Naive thymus-derived CD4-positive, alpha-beta T cell (primary cell): ENCODE measurements at regions of chr9 and their contacts with region 1.

Region 1: GRCh38 chr9:112361601-112362000 is 18.3 kb upstream of the HSDL2 start:
- DNase-seq: peak in 7 of 9 donors; percentile 16 to 51 (median 40)
- ATAC-seq: peak; percentile 60
- H3K4me3 ChIP-seq: no peak overlapping the region
- H3K4me3 Mint-ChIP-seq: no peak overlapping the region
- H3K27ac ChIP-seq: no peak overlapping the region
- H3K27ac Mint-ChIP-seq: no peak overlapping the region
- H3K4me1 ChIP-seq: peaks cover 0 to 4% of the 10 kb centered on the region in 2 donors
- H3K4me1 Mint-ChIP-seq: peaks cover 0 to 4% (median 0%) of the 10 kb centered on the region in 7 donors
- H3K27me3 ChIP-seq: no peaks in the 10 kb centered on the region
- H3K27me3 Mint-ChIP-seq: peaks cover 0 to 22% (median 9%) of the 10 kb centered on the region in 5 donors

Region 2: GRCh38 chr9:112086627-112087026 is 275.0 kb before region 1 on chr9:
- CTCF ChIA-PET with region 1: interaction called, 11 read pairs
- POLR2A ChIA-PET with region 1: interaction called, 4 read pairs
- intact Hi-C with region 1: loop called (anchors 1 kb)
- DNase-seq: no peak
- ATAC-seq: no peak
- H3K4me3 ChIP-seq: no peak overlapping the region
- H3K4me3 Mint-ChIP-seq: no peak overlapping the region
- H3K27ac ChIP-seq: no peak overlapping the region
- H3K27ac Mint-ChIP-seq: no peak overlapping the region
- H3K4me1 ChIP-seq: no peaks in the 10 kb centered on the region
- H3K4me1 Mint-ChIP-seq: peaks cover 0 to 4% (median 0%) of the 10 kb centered on the region in 7 donors
- H3K27me3 ChIP-seq: no peaks in the 10 kb centered on the region
- H3K27me3 Mint-ChIP-seq: no peaks in the 10 kb centered on the region

Region 3: DNA sequence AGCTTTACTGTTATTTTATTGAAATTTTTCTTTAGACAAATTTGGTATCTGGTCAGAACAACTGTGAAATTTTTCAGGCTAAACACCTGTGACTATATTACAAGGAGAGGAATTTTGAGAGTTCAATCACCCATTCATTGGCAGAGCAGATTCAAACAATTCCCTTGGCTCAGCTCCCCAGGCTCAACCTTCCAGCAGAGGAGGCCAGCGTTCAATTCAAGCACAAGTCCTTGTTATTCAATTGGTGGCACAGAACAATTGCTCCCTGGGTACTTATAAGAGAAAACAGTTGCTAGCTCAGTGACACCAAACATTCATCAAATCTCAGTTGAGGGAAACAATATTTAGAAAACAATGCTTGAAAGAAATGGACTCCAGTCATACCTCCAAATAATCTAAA is 269.8 kb before region 1 on chr9:
- CTCF ChIA-PET with region 1: interaction called, 42 read pairs
- POLR2A ChIA-PET with region 1: interaction called, 3 read pairs
- intact Hi-C with region 1: loop called (anchors 1 kb)
- DNase-seq: no peak
- ATAC-seq: no peak
- H3K4me3 ChIP-seq: no peak overlapping the region
- H3K4me3 Mint-ChIP-seq: no peak overlapping the region
- H3K27ac ChIP-seq: no peak overlapping the region
- H3K27ac Mint-ChIP-seq: no peak overlapping the region
- H3K4me1 ChIP-seq: peaks cover 0 to 4% of the 10 kb centered on the region in 2 donors
- H3K4me1 Mint-ChIP-seq: peaks cover 0 to 30% (median 11%) of the 10 kb centered on the region in 7 donors
- H3K27me3 ChIP-seq: no peaks in the 10 kb centered on the region
- H3K27me3 Mint-ChIP-seq: no peaks in the 10 kb centered on the region

Region 4: GRCh38 chr9:112097712-112098688 is 263.6 kb before region 1 on chr9:
- CTCF ChIA-PET with region 1: interaction called, 42 read pairs
- POLR2A ChIA-PET with region 1: interaction called, 4 read pairs
- intact Hi-C with region 1: loop called (anchors 1 kb)
- DNase-seq: peak; percentile 41 to 85 (median 68)
- ATAC-seq: peak; percentile 93
- H3K4me3 ChIP-seq: no peak overlapping the region
- H3K4me3 Mint-ChIP-seq: no peak overlapping the region
- H3K27ac ChIP-seq: no peak overlapping the region
- H3K27ac Mint-ChIP-seq: peak overlapping the region in 1 of 9 donors; percentile 15
- H3K4me1 ChIP-seq: peaks cover 0 to 4% of the 10 kb centered on the region in 2 donors
- H3K4me1 Mint-ChIP-seq: peaks cover 2 to 32% (median 12%) of the 10 kb centered on the region in 7 donors
- H3K27me3 ChIP-seq: no peaks in the 10 kb centered on the region
- H3K27me3 Mint-ChIP-seq: peaks cover 0 to 3% (median 0%) of the 10 kb centered on the region in 5 donors

Region 5: GRCh38 chr9:112112941-112113681 is 248.5 kb before region 1 on chr9:
- CTCF ChIA-PET with region 1: interaction called, 38 read pairs
- POLR2A ChIA-PET with region 1: no interaction called
- intact Hi-C with region 1: loop called (anchors 1 kb)
- DNase-seq: peak in 4 of 9 donors; percentile 7 to 23 (median 8)
- ATAC-seq: no peak
- H3K4me3 ChIP-seq: no peak overlapping the region
- H3K4me3 Mint-ChIP-seq: no peak overlapping the region
- H3K27ac ChIP-seq: no peak overlapping the region
- H3K27ac Mint-ChIP-seq: no peak overlapping the region
- H3K4me1 ChIP-seq: no peaks in the 10 kb centered on the region
- H3K4me1 Mint-ChIP-seq: peaks cover 0 to 5% (median 0%) of the 10 kb centered on the region in 7 donors
- H3K27me3 ChIP-seq: no peaks in the 10 kb centered on the region
- H3K27me3 Mint-ChIP-seq: no peaks in the 10 kb centered on the region

Region 6: DNA sequence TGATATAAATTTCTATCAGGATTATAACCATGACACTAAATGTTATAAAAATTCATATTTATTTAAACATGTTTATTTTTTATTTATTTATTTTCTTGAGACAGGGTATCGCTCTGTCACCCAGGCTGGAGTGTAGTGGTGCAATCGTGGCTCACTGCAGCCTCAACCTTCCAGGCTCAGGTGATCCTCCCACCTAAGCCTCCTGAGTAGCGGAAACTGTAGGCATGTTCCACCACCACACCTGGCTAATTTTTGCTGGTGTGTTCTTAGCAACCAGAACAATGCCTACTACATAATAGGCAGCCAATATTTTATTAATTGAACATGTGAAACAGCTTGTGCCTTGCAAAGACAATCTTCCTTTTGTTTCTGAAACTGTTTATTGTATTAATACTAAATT is 21.7 kb before region 1 on chr9:
- CTCF ChIA-PET with region 1: no interaction called
- POLR2A ChIA-PET with region 1: no interaction called
- intact Hi-C with region 1: no loop called
- DNase-seq: no peak
- ATAC-seq: no peak
- H3K4me3 ChIP-seq: no peak overlapping the region
- H3K4me3 Mint-ChIP-seq: no peak overlapping the region
- H3K27ac ChIP-seq: no peak overlapping the region
- H3K27ac Mint-ChIP-seq: no peak overlapping the region
- H3K4me1 ChIP-seq: peaks cover under 1 to 1% of the 10 kb centered on the region in 2 donors
- H3K4me1 Mint-ChIP-seq: peaks cover 0 to 3% (median 0%) of the 10 kb centered on the region in 7 donors
- H3K27me3 ChIP-seq: no peaks in the 10 kb centered on the region
- H3K27me3 Mint-ChIP-seq: no peaks in the 10 kb centered on the region

Region 7: DNA sequence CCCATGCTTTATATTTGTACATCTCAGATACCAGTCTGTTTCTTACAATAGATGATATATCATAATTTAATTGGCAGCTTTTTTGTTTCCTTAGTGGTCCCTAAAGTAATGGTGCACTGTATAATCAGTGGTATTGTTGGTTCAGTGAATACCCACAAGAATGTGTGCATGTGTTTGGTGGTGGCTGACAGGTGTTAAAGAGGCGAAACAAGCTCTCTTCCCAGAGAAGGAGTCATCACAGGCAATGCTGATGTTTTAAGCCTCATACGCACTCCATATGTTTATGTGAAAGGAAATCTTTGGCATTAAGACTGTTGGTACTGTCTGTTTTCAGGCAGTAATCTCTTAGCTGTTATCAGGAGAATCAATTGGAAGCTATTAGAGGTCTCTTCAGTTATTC is 75.8 kb after region 1 on chr9:
- CTCF ChIA-PET with region 1: no interaction called
- POLR2A ChIA-PET with region 1: no interaction called
- intact Hi-C with region 1: no loop called
- DNase-seq: no peak
- ATAC-seq: no peak
- H3K4me3 ChIP-seq: no peak overlapping the region
- H3K4me3 Mint-ChIP-seq: no peak overlapping the region
- H3K27ac ChIP-seq: no peak overlapping the region
- H3K27ac Mint-ChIP-seq: no peak overlapping the region
- H3K4me1 ChIP-seq: no peaks in the 10 kb centered on the region
- H3K4me1 Mint-ChIP-seq: peaks cover 0 to 5% (median 0%) of the 10 kb centered on the region in 7 donors
- H3K27me3 ChIP-seq: no peaks in the 10 kb centered on the region
- H3K27me3 Mint-ChIP-seq: no peaks in the 10 kb centered on the region